PC-3 (cell line): ENCODE measurements at regions of chr2 and their contacts with region 1.

Region 1: GRCh38 chr2:145530653-145531052 is 1010.7 kb upstream of the ZEB2 start:
- DNase-seq: peak; percentile 39
- ATAC-seq: peak; percentile 77
- H3K4me3 ChIP-seq: no peak overlapping the region
- H3K27ac ChIP-seq: no peak overlapping the region
- H3K4me1 ChIP-seq: no peaks in the 10 kb centered on the region
- H3K27me3 ChIP-seq: no peaks in the 10 kb centered on the region
- CTCF ChIP-seq: no peak

Region 2: GRCh38 chr2:145356056-145356455 is 174.6 kb before region 1 on chr2:
- CTCF ChIA-PET with region 1: interaction called, 10 read pairs
- POLR2A ChIA-PET with region 1: no interaction called
- intact Hi-C with region 1: no loop called
- DNase-seq: no peak
- ATAC-seq: no peak
- H3K4me3 ChIP-seq: no peak overlapping the region
- H3K27ac ChIP-seq: no peak overlapping the region
- H3K4me1 ChIP-seq: no peaks in the 10 kb centered on the region
- H3K27me3 ChIP-seq: no peaks in the 10 kb centered on the region
- CTCF ChIP-seq: no peak

Region 3: GRCh38 chr2:145546091-145546490 is 15.4 kb after region 1 on chr2:
- CTCF ChIA-PET with region 1: no interaction called
- POLR2A ChIA-PET with region 1: no interaction called
- intact Hi-C with region 1: no loop called
- DNase-seq: peak; percentile 53
- ATAC-seq: peak; percentile 27; the same call in 1 of the 2 replicates
- H3K4me3 ChIP-seq: no peak overlapping the region
- H3K27ac ChIP-seq: no peak overlapping the region
- H3K4me1 ChIP-seq: peaks cover 5% of the 10 kb centered on the region; the same call in 1 of the 2 replicates
- H3K27me3 ChIP-seq: no peaks in the 10 kb centered on the region
- CTCF ChIP-seq: peak; percentile 55